ENCODE measurements at regions of chr11 and their contacts with region 1.

Region 1: GRCh38 chr11:30960387-30960992 is 374.3 kb upstream of the MPPED2 start:
- DNase-seq: no peak
- ATAC-seq: peak; percentile 55; the same call in 2 of the 3 replicates
- H3K4me3 ChIP-seq: no peak overlapping the region
- H3K27ac ChIP-seq: no peak overlapping the region
- H3K4me1 ChIP-seq: no peaks in the 10 kb centered on the region
- H3K27me3 ChIP-seq: no peaks in the 10 kb centered on the region
- CTCF ChIP-seq: peak; percentile 16 to 39 (median 30); a peak in 4 of 6 replicates
- EP300 ChIP-seq: no peak
- POLR2A ChIP-seq: no peak
- RAD21 ChIP-seq: peak; percentile 60

Region 2: DNA sequence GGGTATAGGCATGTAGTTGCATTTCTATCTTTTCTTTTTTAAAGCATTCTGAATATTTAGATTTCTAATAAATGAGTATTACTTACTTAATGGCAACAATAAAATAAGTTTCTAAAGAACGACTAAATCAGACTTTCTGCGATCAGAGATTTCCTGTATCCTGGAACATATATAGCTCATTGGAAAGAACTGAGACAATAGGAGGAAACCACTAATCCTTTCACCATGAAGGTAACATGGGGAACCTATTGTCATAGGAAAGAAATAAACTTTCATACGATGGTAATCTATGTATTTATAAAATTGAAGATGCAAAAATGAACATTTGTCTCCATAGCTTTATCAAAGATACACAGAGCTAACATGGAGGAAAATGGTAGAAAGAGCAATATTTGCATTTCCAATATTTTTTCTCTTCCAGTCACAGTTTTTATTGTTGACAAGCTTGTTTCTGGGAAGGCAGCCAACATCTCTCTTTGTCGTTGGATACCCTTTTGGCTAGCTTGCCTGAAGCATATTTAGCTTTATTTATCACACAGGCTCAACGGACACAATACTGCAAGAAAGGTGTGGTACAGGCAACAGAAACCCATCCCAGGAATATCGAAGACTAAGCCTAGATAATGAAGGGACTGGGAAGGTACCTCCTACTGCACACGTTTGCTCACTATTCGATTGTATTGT is 81.0 kb before region 1 on chr11:
- CTCF ChIA-PET with region 1: no interaction called
- POLR2A ChIA-PET with region 1: no interaction called
- RAD21 ChIA-PET with region 1: no interaction called
- SMC1A ChIA-PET with region 1: no interaction called
- in situ Hi-C with region 1: no loop called
- intact Hi-C with region 1: loop called (anchors 5 kb)
- DNase-seq: no peak
- ATAC-seq: no peak
- H3K4me3 ChIP-seq: no peak overlapping the region
- H3K27ac ChIP-seq: no peak overlapping the region
- H3K4me1 ChIP-seq: no peaks in the 10 kb centered on the region
- H3K27me3 ChIP-seq: no peaks in the 10 kb centered on the region
- CTCF ChIP-seq: no peak
- EP300 ChIP-seq: no peak
- POLR2A ChIP-seq: no peak
- RAD21 ChIP-seq: no peak

Region 3: DNA sequence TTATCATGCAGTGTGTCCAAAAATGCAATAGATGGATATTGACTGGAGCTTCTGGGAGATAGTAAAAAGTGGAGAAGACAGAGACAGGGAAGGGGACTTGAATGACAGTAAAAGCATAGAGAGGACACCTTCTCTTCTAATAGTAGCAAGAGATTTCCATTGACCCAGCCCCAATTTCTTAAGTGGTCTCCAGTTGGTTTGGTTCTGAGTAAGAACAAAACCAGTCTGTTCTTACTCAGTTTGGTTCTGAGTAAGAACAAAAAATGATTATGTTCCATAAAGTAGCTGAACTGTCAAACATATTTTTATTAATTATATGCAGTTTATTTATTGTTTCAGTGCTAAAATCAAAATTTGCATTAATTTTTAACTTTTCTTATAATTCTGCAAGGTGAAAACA is 57.6 kb before region 1 on chr11:
- CTCF ChIA-PET with region 1: no interaction called
- POLR2A ChIA-PET with region 1: no interaction called
- RAD21 ChIA-PET with region 1: no interaction called
- SMC1A ChIA-PET with region 1: no interaction called
- in situ Hi-C with region 1: no loop called
- intact Hi-C with region 1: no loop called
- DNase-seq: no peak
- ATAC-seq: no peak
- H3K4me3 ChIP-seq: no peak overlapping the region
- H3K27ac ChIP-seq: no peak overlapping the region
- H3K4me1 ChIP-seq: no peaks in the 10 kb centered on the region
- H3K27me3 ChIP-seq: no peaks in the 10 kb centered on the region
- CTCF ChIP-seq: no peak
- EP300 ChIP-seq: no peak
- POLR2A ChIP-seq: no peak
- RAD21 ChIP-seq: no peak

Region 4: GRCh38 chr11:31045335-31045734 is 84.8 kb after region 1 on chr11:
- CTCF ChIA-PET with region 1: interaction called, 16 read pairs
- POLR2A ChIA-PET with region 1: no interaction called
- RAD21 ChIA-PET with region 1: interaction called, 5 read pairs
- SMC1A ChIA-PET with region 1: interaction called, 11 read pairs
- in situ Hi-C with region 1: no loop called
- intact Hi-C with region 1: no loop called
- DNase-seq: no peak
- ATAC-seq: no peak
- H3K4me3 ChIP-seq: no peak overlapping the region
- H3K27ac ChIP-seq: no peak overlapping the region
- H3K4me1 ChIP-seq: no peaks in the 10 kb centered on the region
- H3K27me3 ChIP-seq: no peaks in the 10 kb centered on the region
- CTCF ChIP-seq: peak in 1 of 3 experiments; percentile 12; a peak in 2 of 6 replicates
- EP300 ChIP-seq: no peak
- POLR2A ChIP-seq: no peak
- RAD21 ChIP-seq: peak; percentile 9; the same call in 1 of the 2 replicates